ENCODE measurements at regions of chr14 and their contacts with region 1.

Region 1: DNA sequence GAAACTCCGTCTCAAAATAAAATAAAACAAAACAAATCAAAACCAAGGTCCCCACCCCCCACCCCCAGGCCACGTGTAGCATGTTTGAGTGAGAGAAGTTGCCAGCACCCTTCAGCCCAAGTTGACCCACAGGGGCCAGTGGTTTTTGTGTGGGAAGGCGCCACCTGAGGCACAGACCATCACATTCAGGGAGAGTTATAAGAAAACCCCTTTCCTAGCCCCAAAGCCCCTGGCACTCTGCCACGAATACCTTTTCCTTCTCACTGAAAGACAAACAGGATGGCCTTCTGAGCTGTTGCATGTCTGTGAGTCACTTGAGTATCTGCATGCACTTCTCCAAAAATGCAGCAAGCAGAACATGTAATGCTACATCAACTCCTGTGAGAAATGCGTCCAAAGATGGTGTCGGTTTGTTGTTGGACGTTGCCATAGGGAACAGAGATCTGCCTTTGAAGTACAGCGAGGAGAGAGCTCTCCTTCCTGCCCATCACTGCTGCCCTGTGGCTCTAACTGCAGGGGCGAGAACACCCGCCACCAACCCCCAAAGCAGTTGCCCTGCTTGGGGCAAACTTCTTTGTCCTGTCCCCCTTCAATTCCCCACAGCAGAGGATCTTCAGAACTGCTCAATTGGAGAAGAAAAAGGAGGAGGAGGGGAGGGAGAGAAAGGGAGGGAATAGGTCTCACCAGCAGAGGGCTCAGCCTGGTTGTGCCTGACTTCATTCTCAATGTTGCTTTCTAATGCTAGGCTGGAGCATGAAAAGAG is 2.7 kb upstream of the TRAF3 start:
- DNase-seq: peak; percentile 65
- ATAC-seq: peak; percentile 27
- H3K4me3 ChIP-seq: peak overlapping the region; percentile 7; the same call in 1 of the 2 replicates
- H3K27ac ChIP-seq: peak overlapping the region; percentile 33
- H3K4me1 ChIP-seq: peaks cover 26% of the 10 kb centered on the region
- H3K27me3 ChIP-seq: no peaks in the 10 kb centered on the region
- CTCF ChIP-seq: peak; percentile 72

Region 2: DNA sequence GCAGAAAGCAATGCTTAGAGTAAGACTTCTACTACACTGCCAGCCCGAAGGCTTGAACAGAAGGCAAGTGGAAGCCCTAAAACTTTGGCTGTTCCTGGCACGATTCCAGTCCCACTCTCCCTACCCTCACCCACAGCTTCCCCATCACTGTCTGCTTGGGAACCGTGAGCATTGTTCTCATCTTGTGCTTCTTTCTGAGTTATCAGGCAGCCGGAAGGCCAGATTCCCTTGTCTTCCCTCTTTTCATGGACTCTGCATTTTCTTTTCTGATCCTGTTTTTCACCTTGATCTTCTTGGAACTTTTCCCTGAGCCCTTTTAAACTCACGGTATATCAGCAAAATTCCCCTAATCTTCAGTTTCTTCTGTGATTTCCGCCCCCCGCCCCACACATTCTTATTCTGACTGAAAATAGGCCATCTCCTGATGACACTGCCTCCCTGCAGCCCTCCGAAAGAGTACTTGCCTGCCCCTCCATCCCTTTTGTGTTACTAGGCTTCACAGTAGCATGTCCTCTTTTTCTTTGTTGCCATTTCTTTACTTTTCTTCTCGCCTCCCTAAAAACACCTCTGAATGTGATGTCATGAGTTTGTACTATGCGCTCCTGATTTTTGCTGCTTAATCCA is 152.2 kb before region 1 on chr14:
- CTCF ChIA-PET with region 1: no interaction called
- POLR2A ChIA-PET with region 1: no interaction called
- intact Hi-C with region 1: no loop called
- DNase-seq: no peak
- ATAC-seq: no peak
- H3K4me3 ChIP-seq: no peak overlapping the region
- H3K27ac ChIP-seq: no peak overlapping the region
- H3K4me1 ChIP-seq: no peaks in the 10 kb centered on the region
- H3K27me3 ChIP-seq: no peaks in the 10 kb centered on the region
- CTCF ChIP-seq: no peak

Region 3: DNA sequence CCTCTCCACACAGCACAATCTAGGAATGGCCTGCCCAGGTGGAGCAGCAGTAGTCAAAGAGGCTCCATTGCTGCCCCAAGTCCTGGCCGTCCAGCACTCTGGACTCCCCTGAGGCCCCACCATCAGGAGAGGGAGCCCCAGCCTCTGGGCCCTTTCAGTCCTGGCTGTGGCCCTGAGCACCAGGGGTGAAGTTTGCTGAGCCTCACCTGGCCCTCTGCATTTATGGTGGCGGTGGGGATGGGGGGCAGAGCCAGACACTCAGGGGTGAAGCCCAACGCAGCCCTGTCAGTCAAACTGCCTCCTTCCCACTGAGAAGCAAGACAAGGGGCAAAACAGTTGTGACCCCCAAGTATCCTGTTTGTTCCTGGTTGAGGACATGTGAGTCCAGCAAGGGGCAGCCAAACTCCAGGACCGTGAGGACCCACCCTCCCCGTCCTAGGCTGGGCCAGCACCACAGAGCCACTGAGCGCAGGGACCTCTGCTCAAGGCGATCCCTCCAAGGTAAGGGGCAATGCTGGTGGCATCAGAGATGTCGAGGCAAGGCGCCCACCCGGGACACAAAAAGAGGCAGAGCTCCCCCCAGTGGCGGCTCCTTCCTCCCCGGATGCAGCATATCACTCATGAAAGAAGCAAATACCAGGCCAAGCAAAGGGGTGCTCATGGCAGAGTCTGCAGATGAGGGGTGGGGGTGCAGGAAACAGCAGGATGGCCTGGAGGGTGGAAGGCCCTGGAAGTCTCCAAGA is 143.1 kb after region 1 on chr14:
- CTCF ChIA-PET with region 1: no interaction called
- POLR2A ChIA-PET with region 1: no interaction called
- intact Hi-C with region 1: loop called (anchors 10 kb)
- DNase-seq: peak; percentile 37
- ATAC-seq: peak; percentile 28; the same call in 1 of the 2 replicates
- H3K4me3 ChIP-seq: no peak overlapping the region
- H3K27ac ChIP-seq: no peak overlapping the region
- H3K4me1 ChIP-seq: no peaks in the 10 kb centered on the region
- H3K27me3 ChIP-seq: no peaks in the 10 kb centered on the region
- CTCF ChIP-seq: peak; percentile 71

Region 4: GRCh38 chr14:102966681-102967505 is 192.3 kb after region 1 on chr14:
- CTCF ChIA-PET with region 1: no interaction called
- POLR2A ChIA-PET with region 1: no interaction called
- intact Hi-C with region 1: no loop called
- DNase-seq: no peak
- ATAC-seq: no peak
- H3K4me3 ChIP-seq: no peak overlapping the region
- H3K27ac ChIP-seq: no peak overlapping the region
- H3K4me1 ChIP-seq: no peaks in the 10 kb centered on the region
- H3K27me3 ChIP-seq: no peaks in the 10 kb centered on the region
- CTCF ChIP-seq: no peak

Measured in PC-3 (cell line).